ENCODE measurements at regions of chr6 and their contacts with region 1.

Region 1: DNA sequence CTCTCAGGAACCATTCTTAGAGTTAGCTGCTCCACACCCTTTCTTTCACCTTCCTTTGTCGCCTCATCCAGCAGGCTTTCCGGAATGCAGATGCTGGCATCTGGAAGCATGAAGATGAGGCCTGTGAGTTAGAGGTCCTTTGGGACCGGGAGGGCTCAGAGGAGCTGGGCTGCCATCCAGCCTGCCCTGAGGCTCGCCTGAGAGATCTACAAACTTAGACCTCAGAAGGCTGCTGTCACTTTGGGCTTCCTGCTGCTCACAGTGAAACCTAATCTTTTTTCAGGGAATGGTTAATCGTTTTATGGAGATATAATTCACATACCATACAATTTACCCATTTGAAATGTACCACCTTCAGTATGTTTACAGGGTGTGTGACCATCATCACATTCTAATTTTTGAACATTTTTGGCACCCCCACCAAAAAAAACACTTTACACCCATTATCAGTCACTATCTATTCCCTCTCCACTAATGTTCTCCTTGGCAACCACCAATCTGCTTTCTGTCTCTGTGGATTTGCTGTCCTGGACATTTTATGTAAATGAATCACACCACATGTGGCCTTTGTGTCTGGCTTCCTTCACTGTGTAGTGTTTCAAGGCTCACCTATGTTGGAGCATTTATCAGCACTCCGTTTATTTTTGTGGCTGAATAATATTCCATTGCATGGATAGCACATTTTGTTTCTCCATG is 20.0 kb upstream of the MPC1 start:
- DNase-seq: no peak
- ATAC-seq: no peak
- H3K4me3 Mint-ChIP-seq: no peak overlapping the region
- H3K27ac Mint-ChIP-seq: no peak overlapping the region
- H3K4me1 Mint-ChIP-seq: no peaks in the 10 kb centered on the region
- H3K27me3 Mint-ChIP-seq: peaks cover 2% of the 10 kb centered on the region
- CTCF ChIP-seq: no peak

Region 2: DNA sequence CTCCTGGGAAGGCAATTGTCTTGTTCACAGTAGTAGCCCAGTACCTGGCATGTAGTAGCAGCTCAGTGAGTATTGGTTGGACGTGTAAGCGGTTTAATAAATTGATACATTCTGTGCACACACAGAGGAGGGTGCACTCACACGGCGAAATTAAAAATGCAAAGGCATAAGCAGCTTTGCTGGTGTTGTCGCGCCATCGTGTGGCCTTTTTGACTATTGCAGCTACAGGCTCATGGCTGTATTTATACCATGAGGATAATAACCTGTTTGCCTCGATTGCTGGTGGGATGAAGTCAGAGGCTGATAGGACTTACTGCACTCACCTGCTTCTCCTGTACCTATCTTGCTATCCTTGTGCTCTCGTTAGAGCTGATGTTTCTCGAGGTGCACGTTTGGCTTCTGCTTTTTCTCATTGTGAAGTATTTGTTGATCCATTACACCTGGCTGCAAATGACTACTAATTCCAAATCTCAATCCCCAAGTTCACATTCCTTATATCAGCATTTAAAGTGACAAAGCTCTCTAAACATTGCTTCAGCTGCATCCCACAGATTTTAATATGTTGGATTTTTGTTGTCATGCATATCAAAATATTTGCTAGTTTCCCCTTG is 296.5 kb before region 1 on chr6:
- CTCF ChIA-PET with region 1: no interaction called
- POLR2A ChIA-PET with region 1: no interaction called
- intact Hi-C with region 1: loop called (anchors 2 kb)
- DNase-seq: peak; percentile 26
- ATAC-seq: peak; percentile 45
- H3K4me3 Mint-ChIP-seq: peak overlapping the region; percentile 32
- H3K27ac Mint-ChIP-seq: no peak overlapping the region
- H3K4me1 Mint-ChIP-seq: peaks cover 5% of the 10 kb centered on the region
- H3K27me3 Mint-ChIP-seq: peaks cover 13% of the 10 kb centered on the region
- CTCF ChIP-seq: no peak

Region 3: GRCh38 chr6:166275714-166276166 is 127.0 kb before region 1 on chr6:
- CTCF ChIA-PET with region 1: interaction called, 67 read pairs
- POLR2A ChIA-PET with region 1: interaction called, 3 read pairs
- intact Hi-C with region 1: loop called (anchors 1 kb)
- DNase-seq: peak; percentile 85
- ATAC-seq: peak; percentile 94
- H3K4me3 Mint-ChIP-seq: no peak overlapping the region
- H3K27ac Mint-ChIP-seq: no peak overlapping the region
- H3K4me1 Mint-ChIP-seq: peaks cover 8% of the 10 kb centered on the region
- H3K27me3 Mint-ChIP-seq: peaks cover 2% of the 10 kb centered on the region
- CTCF ChIP-seq: peak; percentile 97

Region 4: GRCh38 chr6:166313255-166314070 is 89.3 kb before region 1 on chr6:
- CTCF ChIA-PET with region 1: interaction called, 131 read pairs
- POLR2A ChIA-PET with region 1: no interaction called
- intact Hi-C with region 1: loop called (anchors 1 kb)
- DNase-seq: no peak
- ATAC-seq: peak; percentile 88
- H3K4me3 Mint-ChIP-seq: no peak overlapping the region
- H3K27ac Mint-ChIP-seq: no peak overlapping the region
- H3K4me1 Mint-ChIP-seq: peaks cover 6% of the 10 kb centered on the region
- H3K27me3 Mint-ChIP-seq: peaks cover 17% of the 10 kb centered on the region
- CTCF ChIP-seq: no peak

Region 5: DNA sequence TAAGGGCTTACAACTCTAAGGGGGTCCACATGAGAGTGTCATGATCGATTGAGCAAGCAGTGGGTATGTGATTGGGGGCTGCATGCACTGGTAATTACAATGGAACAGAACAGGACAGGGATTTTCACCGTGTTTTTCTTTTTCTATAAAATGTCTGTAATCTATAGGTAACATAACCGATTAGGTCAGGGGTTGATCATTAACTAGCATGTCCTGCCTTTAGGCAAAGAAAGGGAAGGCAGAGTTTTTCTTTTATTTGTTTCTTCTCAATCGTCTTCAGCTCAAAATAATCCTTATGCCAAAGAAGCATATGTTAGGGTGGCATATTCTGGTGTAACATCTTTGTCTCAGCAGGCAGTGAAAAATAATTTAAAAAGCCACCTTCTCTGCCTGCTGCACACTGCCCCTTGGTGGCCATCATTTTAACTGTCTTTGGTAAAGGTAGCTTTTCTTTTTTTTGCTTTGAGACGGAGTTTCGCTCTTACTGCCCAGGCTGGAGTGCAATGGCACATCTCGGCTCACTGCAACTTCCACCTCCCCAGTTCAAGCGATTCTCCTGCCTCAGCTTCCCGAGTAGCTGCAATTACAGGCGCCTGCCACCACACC is 586.8 kb after region 1 on chr6:
- CTCF ChIA-PET with region 1: no interaction called
- POLR2A ChIA-PET with region 1: no interaction called
- intact Hi-C with region 1: no loop called
- DNase-seq: peak; percentile 22
- ATAC-seq: peak; percentile 99
- H3K4me3 Mint-ChIP-seq: no peak overlapping the region
- H3K27ac Mint-ChIP-seq: no peak overlapping the region
- H3K4me1 Mint-ChIP-seq: peaks cover 11% of the 10 kb centered on the region
- H3K27me3 Mint-ChIP-seq: no peaks in the 10 kb centered on the region
- CTCF ChIP-seq: peak; percentile 40

Measured in activated B cell treated with CpG ODN at 0.5 μM for 24 hours (primary cell).